HAP-1 (cell line): ENCODE measurements at regions of chr1 and their contacts with region 1.

Region 1: GRCh38 chr1:53196485-53197270 is at the start of gene CPT2:
- DNase-seq: peak; percentile 88 to 96
- H3K4me3 ChIP-seq: peak within 1 kb of the TSS; percentile 61
- H3K4me1 ChIP-seq: peaks cover 8% of the 10 kb centered on the region
- H3K27me3 ChIP-seq: no peaks in the 10 kb centered on the region

Region 2: GRCh38 chr1:52904927-52905698 is 291.6 kb before region 1 on chr1:
- in situ Hi-C with region 1: loop called (anchors 25 kb)
- DNase-seq: peak; percentile 36 to 73
- H3K4me3 ChIP-seq: no peak overlapping the region
- H3K4me1 ChIP-seq: peaks cover 11% of the 10 kb centered on the region
- H3K27me3 ChIP-seq: no peaks in the 10 kb centered on the region